ENCODE measurements at regions of chr11 and their contacts with region 1.

Region 1: GRCh38 chr11:72751285-72752087 is 722 bp downstream of the ARAP1 start:
- DNase-seq: no peak
- H3K4me3 Mint-ChIP-seq: peak overlapping the region; percentile 83
- H3K27ac Mint-ChIP-seq: peak overlapping the region; percentile 92
- H3K4me1 Mint-ChIP-seq: peaks cover 35% of the 10 kb centered on the region
- H3K27me3 Mint-ChIP-seq: no peaks in the 10 kb centered on the region

Region 2: DNA sequence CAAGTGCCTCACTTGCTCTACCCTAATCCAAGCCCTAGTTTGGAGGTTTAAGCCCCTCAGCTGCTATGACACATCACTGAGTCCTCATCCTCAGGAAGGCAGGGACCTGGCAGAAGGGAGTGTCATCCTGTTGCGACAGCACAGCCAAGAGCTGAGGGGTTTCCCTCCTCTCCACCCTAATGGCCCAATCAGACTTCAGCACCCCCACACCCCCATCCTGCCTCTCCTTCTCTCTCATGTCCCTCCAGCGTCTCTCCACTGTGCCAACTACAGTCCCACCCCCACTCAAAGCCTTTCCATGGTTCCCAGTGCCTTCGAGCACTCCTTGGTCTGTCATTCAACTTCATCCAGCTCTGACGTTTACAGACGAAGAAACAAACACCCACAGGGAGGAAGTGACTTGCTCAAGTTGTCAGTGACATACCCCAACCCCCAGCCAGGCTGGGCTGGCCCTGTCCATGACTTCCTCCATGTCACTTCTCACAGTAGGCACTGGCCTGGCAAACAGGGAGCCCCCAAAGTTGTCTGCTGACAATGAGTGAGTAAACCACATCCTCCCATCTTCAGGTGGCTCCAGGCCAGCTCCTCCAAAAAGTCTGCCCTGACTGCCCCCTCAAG is 14.9 kb before region 1 on chr11:
- CTCF ChIA-PET with region 1: interaction called, 16 read pairs
- POLR2A ChIA-PET with region 1: interaction called, 4 read pairs
- DNase-seq: peak; percentile 69
- H3K4me3 Mint-ChIP-seq: peak overlapping the region; percentile 51
- H3K27ac Mint-ChIP-seq: peak overlapping the region; percentile 99
- H3K4me1 Mint-ChIP-seq: peaks cover 57% of the 10 kb centered on the region
- H3K27me3 Mint-ChIP-seq: no peaks in the 10 kb centered on the region

Measured in activated CD4-positive, alpha-beta T cell treated with anti-CD3 and anti-CD28 coated beads, Interleukin-2, amount 10 ng/mL, durations not matched to agents 7 days and 5 days (primary cell).